Naive thymus-derived CD4-positive, alpha-beta T cell (primary cell): ENCODE measurements at regions of chr15 and their contacts with region 1.

Region 1: GRCh38 chr15:44426975-44427755 is at the start of gene CTDSPL2:
- DNase-seq: peak; percentile 87 to 98 (median 94)
- ATAC-seq: peak; percentile 98
- H3K4me3 ChIP-seq: peak within 1 kb of the TSS; percentile 94
- H3K4me3 Mint-ChIP-seq: peak within 1 kb of the TSS; percentile 95 to 99 (median 98)
- H3K27ac ChIP-seq: peak within 1 kb of the TSS; percentile 94
- H3K27ac Mint-ChIP-seq: peak within 1 kb of the TSS; percentile 98 to 100 (median 99)
- H3K4me1 ChIP-seq: peaks cover 10% of the 10 kb centered on the region in 2 donors
- H3K4me1 Mint-ChIP-seq: peaks cover 35 to 65% (median 51%) of the 10 kb centered on the region in 7 donors
- H3K27me3 ChIP-seq: no peaks in the 10 kb centered on the region
- H3K27me3 Mint-ChIP-seq: peaks cover 0 to 2% (median 0%) of the 10 kb centered on the region in 5 donors
- total RNA-seq, gene CTDSPL2: 60.3 to 81.8 (median 77.3) TPM

Region 2: DNA sequence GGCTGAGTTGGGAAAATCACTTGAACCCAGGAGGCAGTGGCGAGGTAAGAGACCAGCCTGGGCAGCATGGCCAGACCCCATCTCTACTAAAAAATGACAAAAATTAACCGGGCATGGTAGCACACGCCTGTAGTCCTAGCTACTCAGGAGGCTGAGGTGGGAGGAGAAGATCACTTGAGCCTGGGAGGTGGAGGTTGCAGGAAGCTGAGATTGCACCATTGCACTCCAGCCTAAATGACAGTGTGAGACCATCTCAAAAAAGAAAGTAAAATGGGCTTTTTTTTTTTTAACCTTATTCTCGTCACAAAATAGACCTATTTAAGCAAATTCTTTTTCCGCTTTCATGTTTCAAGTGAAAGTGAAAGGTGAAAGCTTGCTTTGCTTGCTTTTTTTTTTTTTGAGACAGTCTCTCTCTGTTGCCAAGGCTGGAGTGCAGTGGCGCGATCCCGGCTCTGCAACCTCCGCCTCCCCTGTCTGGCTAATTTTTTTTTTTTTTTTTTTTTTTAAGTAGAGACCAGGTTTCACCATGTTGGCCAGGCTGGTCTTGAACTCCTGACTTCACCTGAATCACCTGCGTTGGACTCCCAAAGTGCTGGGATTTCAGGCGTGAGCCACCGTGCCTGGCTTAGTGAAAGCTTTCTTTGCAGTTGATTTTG is 677.3 kb before region 1 on chr15:
- CTCF ChIA-PET with region 1: no interaction called
- POLR2A ChIA-PET with region 1: no interaction called
- intact Hi-C with region 1: loop called in 1 of 2 experiments (anchors 2 kb)
- DNase-seq: peak in 8 of 9 donors; percentile 38 to 84 (median 77)
- ATAC-seq: peak; percentile 59
- H3K4me3 ChIP-seq: peak overlapping the region; percentile 53
- H3K4me3 Mint-ChIP-seq: peak overlapping the region; percentile 75 to 97 (median 82)
- H3K27ac ChIP-seq: peak overlapping the region; percentile 75
- H3K27ac Mint-ChIP-seq: peak overlapping the region; percentile 77 to 92 (median 90)
- H3K4me1 ChIP-seq: peaks cover 30 to 43% of the 10 kb centered on the region in 2 donors
- H3K4me1 Mint-ChIP-seq: peaks cover 37 to 66% (median 54%) of the 10 kb centered on the region in 7 donors
- H3K27me3 ChIP-seq: no peaks in the 10 kb centered on the region
- H3K27me3 Mint-ChIP-seq: no peaks in the 10 kb centered on the region

Region 3: DNA sequence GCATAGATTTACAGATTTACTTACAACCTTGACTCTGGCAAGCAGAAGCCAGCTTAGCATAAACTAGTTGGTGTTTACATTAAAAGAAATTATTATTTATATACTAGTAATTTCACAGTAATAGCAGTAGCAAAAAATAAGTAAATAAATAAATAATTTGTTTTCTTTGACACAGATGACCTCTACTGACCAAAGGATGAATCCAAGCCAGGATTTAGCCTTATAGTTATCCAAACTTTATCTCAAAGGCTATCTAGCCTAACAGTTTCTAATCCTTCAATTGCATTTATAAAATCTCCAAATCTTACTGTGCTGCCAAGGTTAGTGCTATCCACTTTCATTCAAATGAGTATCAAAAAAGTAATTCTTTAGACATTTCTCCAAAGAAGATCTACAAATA is 296.4 kb before region 1 on chr15:
- CTCF ChIA-PET with region 1: no interaction called
- POLR2A ChIA-PET with region 1: no interaction called
- intact Hi-C with region 1: no loop called
- DNase-seq: no peak
- ATAC-seq: no peak
- H3K4me3 ChIP-seq: no peak overlapping the region
- H3K4me3 Mint-ChIP-seq: no peak overlapping the region
- H3K27ac ChIP-seq: no peak overlapping the region
- H3K27ac Mint-ChIP-seq: no peak overlapping the region
- H3K4me1 ChIP-seq: no peaks in the 10 kb centered on the region
- H3K4me1 Mint-ChIP-seq: no peaks in the 10 kb centered on the region
- H3K27me3 ChIP-seq: no peaks in the 10 kb centered on the region
- H3K27me3 Mint-ChIP-seq: peaks cover 6 to 24% (median 12%) of the 10 kb centered on the region in 5 donors

Region 4: GRCh38 chr15:44195151-44195740 is 231.9 kb before region 1 on chr15 and contains the start of gene FRMD5:
- CTCF ChIA-PET with region 1: no interaction called
- POLR2A ChIA-PET with region 1: no interaction called
- intact Hi-C with region 1: loop called in 1 of 2 experiments (anchors 1 kb)
- DNase-seq: peak; percentile 70 to 90 (median 85)
- ATAC-seq: peak; percentile 98
- H3K4me3 ChIP-seq: peak within 1 kb of the TSS; percentile 67
- H3K4me3 Mint-ChIP-seq: peak within 1 kb of the TSS; percentile 76 to 94 (median 90)
- H3K27ac ChIP-seq: no peak within 1 kb of the TSS
- H3K27ac Mint-ChIP-seq: peak within 1 kb of the TSS in 4 of 9 donors; percentile 10 to 43 (median 38)
- H3K4me1 ChIP-seq: peaks cover 4 to 11% of the 10 kb centered on the region in 2 donors
- H3K4me1 Mint-ChIP-seq: peaks cover 6 to 26% (median 18%) of the 10 kb centered on the region in 7 donors
- H3K27me3 ChIP-seq: peaks cover 4 to 9% of the 10 kb centered on the region in 2 donors
- H3K27me3 Mint-ChIP-seq: peaks cover 62 to 77% (median 72%) of the 10 kb centered on the region in 5 donors
- total RNA-seq, gene FRMD5: 0.35 TPM in 1 of 5 experiments, not detected in the others

Region 5: DNA sequence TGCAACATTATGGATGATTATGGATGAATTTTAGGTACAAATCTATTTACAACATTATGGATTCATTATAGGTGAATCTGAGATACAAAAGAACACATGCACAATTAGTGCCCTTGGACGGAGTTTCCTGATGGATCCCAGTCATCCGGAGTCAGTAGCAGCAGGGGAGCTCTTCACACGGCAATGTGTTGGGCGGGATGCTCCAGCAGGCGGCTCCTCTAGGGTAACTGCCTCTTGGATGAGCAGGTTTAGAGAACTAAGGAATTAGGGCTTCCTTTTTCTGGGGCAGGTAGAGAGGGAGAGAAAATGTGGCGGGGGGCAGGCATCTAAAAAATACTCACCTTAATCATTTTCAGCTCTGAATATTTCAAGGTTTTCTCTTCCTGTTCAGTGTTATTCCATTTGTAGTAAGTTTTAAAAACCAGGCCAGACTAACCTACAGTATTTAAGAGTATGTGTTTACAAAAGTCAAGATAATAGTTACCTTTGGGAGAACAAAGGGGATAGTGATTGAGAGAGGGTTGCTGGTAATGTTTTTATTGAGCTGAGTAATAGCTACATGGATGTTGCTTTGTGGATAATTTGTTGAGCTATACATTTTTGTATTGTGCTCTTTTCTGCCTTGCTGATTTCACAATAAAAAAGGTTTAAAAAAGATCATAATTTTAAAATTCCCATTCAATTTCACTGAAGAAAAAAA is 166.0 kb before region 1 on chr15:
- CTCF ChIA-PET with region 1: no interaction called
- POLR2A ChIA-PET with region 1: no interaction called
- intact Hi-C with region 1: no loop called
- DNase-seq: no peak
- ATAC-seq: no peak
- H3K4me3 ChIP-seq: no peak overlapping the region
- H3K4me3 Mint-ChIP-seq: no peak overlapping the region
- H3K27ac ChIP-seq: no peak overlapping the region
- H3K27ac Mint-ChIP-seq: no peak overlapping the region
- H3K4me1 ChIP-seq: no peaks in the 10 kb centered on the region
- H3K4me1 Mint-ChIP-seq: peaks cover 0 to 1% (median 0%) of the 10 kb centered on the region in 7 donors
- H3K27me3 ChIP-seq: no peaks in the 10 kb centered on the region
- H3K27me3 Mint-ChIP-seq: peaks cover 0 to 19% (median 0%) of the 10 kb centered on the region in 5 donors

Region 6: DNA sequence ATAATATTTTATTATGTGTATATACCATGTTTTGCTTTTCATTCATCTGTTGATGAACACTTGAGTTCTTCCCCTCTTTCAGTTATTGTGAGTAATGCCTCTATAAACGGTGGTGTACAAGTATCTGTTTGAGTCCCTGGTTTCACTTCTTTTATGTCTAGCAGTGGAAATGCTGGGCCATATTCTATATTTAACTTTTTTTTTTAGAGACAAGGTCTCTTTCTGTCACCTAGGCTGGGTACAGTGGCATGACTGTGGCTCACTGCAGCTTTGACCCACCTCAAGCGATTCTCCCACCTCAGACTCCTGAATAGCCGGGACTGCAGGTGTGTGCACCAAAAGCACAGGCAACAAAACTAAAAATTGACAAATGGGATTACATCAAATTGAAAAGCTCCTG is 118.8 kb before region 1 on chr15:
- CTCF ChIA-PET with region 1: no interaction called
- POLR2A ChIA-PET with region 1: no interaction called
- intact Hi-C with region 1: loop called in 1 of 2 experiments (anchors 1 kb)
- DNase-seq: peak in 1 of 9 donors; percentile 42
- ATAC-seq: no peak
- H3K4me3 ChIP-seq: no peak overlapping the region
- H3K4me3 Mint-ChIP-seq: peak overlapping the region in 1 of 10 donors; percentile 11
- H3K27ac ChIP-seq: no peak overlapping the region
- H3K27ac Mint-ChIP-seq: peak overlapping the region in 1 of 9 donors; percentile 72
- H3K4me1 ChIP-seq: no peaks in the 10 kb centered on the region
- H3K4me1 Mint-ChIP-seq: peaks cover 17 to 49% (median 35%) of the 10 kb centered on the region in 7 donors
- H3K27me3 ChIP-seq: no peaks in the 10 kb centered on the region
- H3K27me3 Mint-ChIP-seq: no peaks in the 10 kb centered on the region

Region 7: GRCh38 chr15:44501768-44502366 is 74.7 kb after region 1 on chr15:
- CTCF ChIA-PET with region 1: interaction called, 3 read pairs
- POLR2A ChIA-PET with region 1: interaction called, 7 read pairs
- intact Hi-C with region 1: loop called in 1 of 2 experiments (anchors 1 kb)
- DNase-seq: peak in 5 of 9 donors; percentile 24 to 35 (median 29)
- ATAC-seq: peak; percentile 69
- H3K4me3 ChIP-seq: no peak overlapping the region
- H3K4me3 Mint-ChIP-seq: no peak overlapping the region
- H3K27ac ChIP-seq: no peak overlapping the region
- H3K27ac Mint-ChIP-seq: no peak overlapping the region
- H3K4me1 ChIP-seq: no peaks in the 10 kb centered on the region
- H3K4me1 Mint-ChIP-seq: peaks cover 0 to 21% (median 19%) of the 10 kb centered on the region in 7 donors
- H3K27me3 ChIP-seq: no peaks in the 10 kb centered on the region
- H3K27me3 Mint-ChIP-seq: no peaks in the 10 kb centered on the region

Region 8: DNA sequence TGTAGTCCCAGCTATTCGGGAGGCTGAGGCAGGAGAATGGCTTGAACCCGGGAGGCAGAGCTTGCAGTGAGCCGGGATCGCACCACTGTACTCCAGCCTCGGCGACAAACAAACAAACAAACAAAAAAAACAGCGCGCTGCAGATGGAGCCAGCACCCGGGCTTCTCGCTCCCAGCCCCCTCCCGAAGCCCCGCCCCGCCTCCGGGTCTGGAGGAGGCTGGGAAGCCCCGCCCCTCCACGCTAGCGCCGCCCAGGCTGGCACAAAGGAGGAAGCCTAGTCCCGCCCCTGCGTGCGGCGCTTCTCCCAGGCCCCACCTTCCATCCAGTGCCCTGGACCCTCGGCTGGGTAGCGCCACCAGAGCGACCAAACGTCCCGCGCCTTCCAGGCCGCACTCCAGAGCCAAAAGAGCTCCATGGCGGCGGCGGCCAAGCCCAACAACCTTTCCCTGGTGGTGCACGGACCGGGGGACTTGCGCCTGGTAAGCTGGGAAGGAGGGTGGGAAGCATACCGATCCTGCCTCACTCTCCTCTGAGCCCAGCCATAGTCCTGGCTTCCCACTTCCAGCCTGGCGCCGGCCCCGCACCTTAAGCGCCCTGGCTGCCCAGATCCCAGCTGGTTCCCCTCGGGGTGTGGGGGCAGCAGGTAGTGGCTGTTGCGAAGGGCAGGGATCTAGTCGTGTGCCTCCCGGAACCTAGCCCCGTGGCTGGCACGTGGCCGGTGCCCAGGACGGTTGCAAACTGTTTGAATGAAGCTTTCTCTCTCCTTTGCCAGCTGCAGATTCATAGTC is 595.9 kb after region 1 on chr15 and contains the start of gene SORD:
- CTCF ChIA-PET with region 1: no interaction called
- POLR2A ChIA-PET with region 1: no interaction called
- intact Hi-C with region 1: loop called in 1 of 2 experiments (anchors 2 kb)
- DNase-seq: peak; percentile 77 to 96 (median 83)
- ATAC-seq: peak; percentile 99
- H3K4me3 ChIP-seq: peak within 1 kb of the TSS; percentile 83
- H3K4me3 Mint-ChIP-seq: peak within 1 kb of the TSS; percentile 80 to 93 (median 88)
- H3K27ac ChIP-seq: peak within 1 kb of the TSS; percentile 42
- H3K27ac Mint-ChIP-seq: peak within 1 kb of the TSS; percentile 14 to 86 (median 60)
- H3K4me1 ChIP-seq: peaks cover 8 to 10% of the 10 kb centered on the region in 2 donors
- H3K4me1 Mint-ChIP-seq: peaks cover 12 to 32% (median 17%) of the 10 kb centered on the region in 7 donors
- H3K27me3 ChIP-seq: no peaks in the 10 kb centered on the region
- H3K27me3 Mint-ChIP-seq: peaks cover 12 to 28% (median 21%) of the 10 kb centered on the region in 5 donors
- total RNA-seq, gene SORD: 2.7 to 7.8 (median 6.4) TPM